ENCODE measurements at regions of chr1 and their contacts with region 1.

Region 1: GRCh38 chr1:45303582-45304310 is 22.9 kb upstream of the HPDL start:
- DNase-seq: peak; percentile 82
- H3K4me3 ChIP-seq: peak overlapping the region; percentile 79
- CTCF ChIP-seq: peak; percentile 82

Region 2: GRCh38 chr1:44835738-44836675 is 467.7 kb before region 1 on chr1:
- CTCF ChIA-PET with region 1: interaction called, 43 read pairs
- POLR2A ChIA-PET with region 1: no interaction called
- DNase-seq: no peak
- H3K4me3 ChIP-seq: no peak overlapping the region
- CTCF ChIP-seq: peak; percentile 87

Region 3: DNA sequence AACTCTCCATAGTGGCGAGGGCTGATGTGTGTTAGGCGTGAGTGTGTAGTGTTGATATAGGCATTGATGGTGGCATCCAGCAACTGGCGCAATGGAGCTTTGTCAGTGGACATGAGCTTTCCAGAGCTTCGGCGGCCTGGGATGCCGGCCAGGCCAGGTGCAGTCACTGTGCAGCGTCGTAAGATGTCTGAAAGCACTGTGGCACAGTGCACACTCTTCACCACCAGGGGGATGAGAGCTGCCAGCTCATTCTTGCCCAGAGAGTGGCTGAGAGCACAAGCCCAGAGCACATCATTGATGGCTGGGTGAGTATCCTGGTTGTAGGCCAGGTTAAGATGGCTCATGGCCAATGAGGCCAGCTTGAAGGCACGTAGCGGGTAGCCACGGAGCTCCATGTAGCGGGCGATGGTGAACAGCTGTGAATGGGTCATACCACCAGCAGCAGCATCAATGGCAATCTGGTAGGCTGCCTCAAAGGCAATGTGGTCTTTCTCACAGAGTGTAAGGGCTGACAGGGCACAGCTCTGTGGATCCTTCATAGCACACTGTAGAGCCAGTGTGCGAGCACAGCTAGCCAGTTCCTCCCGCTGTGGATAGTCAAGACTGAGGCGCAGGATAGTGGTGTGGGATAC is 285.0 kb before region 1 on chr1:
- CTCF ChIA-PET with region 1: interaction called, 950 read pairs
- POLR2A ChIA-PET with region 1: interaction called, 10 read pairs
- DNase-seq: no peak
- H3K4me3 ChIP-seq: no peak overlapping the region
- CTCF ChIP-seq: peak; percentile 94

Region 4: DNA sequence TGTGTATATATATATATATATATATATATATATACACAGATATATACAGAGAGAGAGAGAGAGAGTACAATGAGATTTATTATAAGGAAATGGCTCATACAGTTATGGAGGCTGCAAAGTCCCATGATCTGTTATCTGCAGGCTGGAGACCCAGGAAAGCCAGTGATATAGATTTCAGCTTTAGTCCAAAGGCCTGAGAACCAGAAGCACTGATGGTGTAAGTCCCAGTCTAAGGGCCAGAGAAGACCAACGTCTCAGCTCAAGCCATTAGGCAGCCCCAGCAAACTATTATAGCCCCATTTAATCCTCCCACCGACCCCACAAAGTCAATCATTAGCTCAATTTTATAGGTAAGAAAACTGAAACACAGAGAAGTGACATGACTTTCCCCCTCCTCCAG is 12.0 kb before region 1 on chr1:
- CTCF ChIA-PET with region 1: interaction called, 19 read pairs
- POLR2A ChIA-PET with region 1: no interaction called
- DNase-seq: no peak
- H3K4me3 ChIP-seq: no peak overlapping the region
- CTCF ChIP-seq: no peak

Region 5: DNA sequence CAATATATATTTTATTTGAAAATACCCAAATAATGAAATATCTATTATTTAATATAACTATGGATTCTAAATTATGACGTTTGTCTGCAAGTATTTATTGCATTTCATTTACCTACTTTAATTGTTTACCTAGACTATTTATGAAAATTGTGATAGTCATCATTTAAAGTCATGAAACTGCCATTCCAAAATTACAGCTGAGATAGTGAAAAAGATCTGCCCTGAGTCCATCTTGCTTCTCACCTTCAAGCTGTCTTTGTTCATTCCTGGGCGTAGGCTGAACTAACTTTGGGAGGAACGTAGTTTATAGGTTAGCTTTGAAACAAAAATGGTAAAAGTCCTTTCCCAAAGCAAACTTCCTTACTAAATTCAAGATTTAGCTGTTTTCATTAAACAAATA is 10.5 kb after region 1 on chr1:
- CTCF ChIA-PET with region 1: interaction called, 12 read pairs
- POLR2A ChIA-PET with region 1: no interaction called
- DNase-seq: no peak
- H3K4me3 ChIP-seq: no peak overlapping the region
- CTCF ChIP-seq: no peak

Region 6: DNA sequence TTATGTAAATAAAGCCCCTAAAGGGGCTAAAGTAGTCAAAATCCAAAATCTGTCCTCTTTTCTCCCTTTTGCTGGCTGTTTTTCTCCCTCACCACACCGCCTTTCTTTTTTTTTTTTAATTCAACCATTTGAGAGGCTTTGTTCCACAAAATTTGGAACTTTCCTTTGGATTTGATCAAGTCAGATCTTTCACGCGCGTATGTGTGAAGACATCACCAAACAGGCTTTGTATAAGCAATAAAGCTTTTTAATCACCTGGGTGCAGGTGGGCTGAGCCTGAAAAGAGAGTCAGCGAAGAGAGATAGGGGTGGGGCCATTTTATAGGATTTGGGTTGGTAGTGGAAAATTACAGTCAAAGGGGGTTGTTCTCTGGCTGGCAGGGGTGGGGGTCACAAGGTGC is 17.7 kb after region 1 on chr1:
- CTCF ChIA-PET with region 1: interaction called, 12 read pairs
- POLR2A ChIA-PET with region 1: no interaction called
- DNase-seq: no peak
- H3K4me3 ChIP-seq: no peak overlapping the region
- CTCF ChIP-seq: no peak